ENCODE measurements at regions of chr5 and their contacts with region 1.

Region 1: DNA sequence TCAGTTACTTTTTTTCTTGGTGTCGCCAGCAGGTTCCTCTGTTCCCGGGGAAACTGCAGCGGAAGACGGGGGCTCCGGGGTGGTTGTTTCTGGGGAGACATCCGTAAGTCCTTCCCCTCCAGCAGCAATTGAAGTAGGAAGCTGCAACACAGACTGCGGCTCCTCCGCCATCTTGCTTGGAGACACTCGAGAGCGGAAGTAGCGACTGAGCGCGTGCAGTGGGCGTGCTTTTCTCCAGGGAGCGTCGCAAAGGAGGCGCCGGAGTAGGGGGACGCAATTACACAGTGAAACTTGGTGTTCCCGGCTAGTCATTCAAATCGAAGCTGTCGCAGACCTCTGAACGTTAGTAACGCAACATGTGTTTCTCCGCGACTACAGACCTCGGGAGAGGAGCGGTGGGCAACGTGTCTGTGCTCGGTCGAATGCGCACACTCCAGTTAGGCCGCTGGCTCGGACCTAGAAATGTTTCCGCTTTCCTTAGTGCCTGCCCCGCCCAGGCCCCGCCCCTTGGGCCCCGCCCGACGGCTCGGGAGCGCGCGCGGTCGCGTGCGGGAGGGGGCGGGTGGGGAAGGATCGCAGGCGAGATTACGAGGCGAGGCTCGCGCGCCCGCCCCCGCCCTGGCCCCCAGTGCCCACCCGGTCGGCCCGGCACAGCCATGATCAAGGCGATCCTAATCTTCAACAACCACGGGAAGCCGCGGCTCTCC is at the starts of genes AP3S1 and ATG12:
- DNase-seq: peak; percentile 91
- H3K4me3 ChIP-seq: peak within 1 kb of the TSS; percentile 86 to 91
- H3K27ac ChIP-seq: peak within 1 kb of the TSS; percentile 96
- H3K4me1 ChIP-seq: no peaks in the 10 kb centered on the region
- H3K27me3 ChIP-seq: no peaks in the 10 kb centered on the region
- CTCF ChIP-seq: peak in 1 of 4 experiments; percentile 4
- POLR2A ChIP-seq: peak; percentile 84
- total RNA-seq, gene AP3S1: 32.0 to 163 TPM
- total RNA-seq, gene ATG12: 29.6 to 67.6 TPM

Region 2: GRCh38 chr5:115625579-115626444 is 215.7 kb before region 1 on chr5 and contains the start of gene TMED7:
- intact Hi-C with region 1: loop called (anchors 5 kb)
- DNase-seq: peak; percentile 99
- H3K4me3 ChIP-seq: peak within 1 kb of the TSS; percentile 69 to 84
- H3K27ac ChIP-seq: peak within 1 kb of the TSS; percentile 92 to 95
- H3K4me1 ChIP-seq: no peaks in the 10 kb centered on the region
- H3K27me3 ChIP-seq: no peaks in the 10 kb centered on the region
- CTCF ChIP-seq: peak in 2 of 4 experiments; percentile 30 to 40
- POLR2A ChIP-seq: peak; percentile 90
- total RNA-seq, gene TMED7: 109 to 155 TPM

Region 3: GRCh38 chr5:115816226-115817081 is 25.1 kb before region 1 on chr5 and contains the start of gene CDO1:
- intact Hi-C with region 1: loop called (anchors 2 kb)
- DNase-seq: no peak
- H3K4me3 ChIP-seq: peak within 1 kb of the TSS; percentile 34 to 49
- H3K27ac ChIP-seq: peak within 1 kb of the TSS; percentile 30 to 69
- H3K4me1 ChIP-seq: no peaks in the 10 kb centered on the region
- H3K27me3 ChIP-seq: no peaks in the 10 kb centered on the region
- CTCF ChIP-seq: no peak
- POLR2A ChIP-seq: no peak
- total RNA-seq, gene CDO1: 20.0 to 29.8 TPM

Region 4: GRCh38 chr5:116428966-116429365 is 587.4 kb after region 1 on chr5:
- intact Hi-C with region 1: no loop called
- DNase-seq: no peak
- H3K4me3 ChIP-seq: no peak overlapping the region
- H3K27ac ChIP-seq: no peak overlapping the region
- H3K4me1 ChIP-seq: peaks cover 4% of the 10 kb centered on the region
- H3K27me3 ChIP-seq: no peaks in the 10 kb centered on the region
- CTCF ChIP-seq: no peak
- POLR2A ChIP-seq: no peak